Ascending aorta (tissue), 2 donors: ENCODE measurements at regions of chr9 and their contacts with region 1.

Region 1: DNA sequence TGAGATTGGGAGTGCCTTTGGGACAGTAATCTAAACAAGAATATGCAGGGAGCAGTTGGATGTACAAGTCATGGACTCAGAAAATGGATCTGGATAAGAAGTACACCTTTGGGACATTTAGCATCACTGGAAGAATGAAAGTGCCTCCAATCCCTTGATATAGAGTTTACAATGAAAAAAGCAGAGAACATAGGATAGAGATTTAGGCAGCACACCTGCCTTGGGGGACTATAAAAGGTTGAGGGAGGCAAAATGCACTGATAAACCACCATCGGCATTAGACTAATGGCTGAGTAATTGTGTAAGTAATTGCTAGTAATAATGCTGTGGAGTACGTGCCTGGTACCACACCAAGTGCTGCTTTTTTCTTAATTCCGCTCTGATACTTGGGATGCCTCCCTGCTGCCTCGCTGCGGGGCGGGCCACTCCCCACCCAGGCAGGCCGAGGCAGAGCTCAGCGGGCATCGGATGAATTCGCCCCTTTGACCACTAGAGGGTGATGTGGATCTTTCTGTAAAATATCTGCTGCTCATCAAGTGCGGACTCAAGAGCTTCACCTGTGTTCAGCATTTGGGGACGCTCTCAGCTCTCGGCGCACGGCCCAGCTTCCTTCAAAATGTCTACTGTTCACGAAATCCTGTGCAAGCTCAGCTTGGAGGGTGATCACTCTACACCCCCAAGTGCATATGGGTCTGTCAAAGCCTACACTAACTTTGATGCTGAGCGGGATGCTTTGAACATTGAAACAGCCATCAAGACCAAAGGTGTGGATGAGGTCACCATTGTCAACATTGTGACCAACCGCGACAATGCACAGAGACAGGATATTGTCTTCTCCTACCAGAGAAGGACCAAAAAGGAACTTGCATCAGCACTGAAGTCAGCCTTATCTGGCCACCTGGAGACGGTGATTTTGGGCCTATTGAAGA is 99.9 kb downstream of the ANKRD18B start:
- DNase-seq: peak in 1 of 2 donors; percentile 77
- H3K4me3 ChIP-seq: no peak overlapping the region
- H3K27ac ChIP-seq: no peak overlapping the region
- H3K4me1 ChIP-seq: no peaks in the 10 kb centered on the region
- H3K27me3 ChIP-seq: no peaks in the 10 kb centered on the region
- CTCF ChIP-seq: peak; percentile 74 to 89 (median 76)

Region 2: DNA sequence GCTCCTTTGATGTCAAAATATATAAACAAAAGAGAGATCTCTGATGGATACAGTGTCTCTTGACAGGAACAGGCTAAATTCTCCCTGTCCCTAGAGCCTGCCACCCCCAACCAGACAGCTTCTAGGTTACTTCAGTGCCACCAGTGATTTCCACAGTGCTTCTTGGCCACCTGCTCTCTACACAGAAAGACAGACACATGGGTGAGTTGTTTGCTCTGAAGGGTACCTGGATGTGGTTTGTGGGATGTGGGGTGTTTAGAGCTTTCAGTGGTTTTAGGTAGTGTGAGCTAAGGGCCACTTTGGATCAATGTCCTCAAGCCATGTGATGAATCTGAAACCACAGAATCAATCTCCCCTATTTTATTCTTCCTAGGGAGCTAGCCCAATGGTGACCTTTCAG is 25.5 kb after region 1 on chr9:
- intact Hi-C with region 1: no loop called
- DNase-seq: no peak
- H3K4me3 ChIP-seq: no peak overlapping the region
- H3K27ac ChIP-seq: no peak overlapping the region
- H3K4me1 ChIP-seq: no peaks in the 10 kb centered on the region
- H3K27me3 ChIP-seq: no peaks in the 10 kb centered on the region
- CTCF ChIP-seq: no peak

Region 3: GRCh38 chr9:33852216-33852826 is 228.4 kb after region 1 on chr9:
- intact Hi-C with region 1: loop called (anchors 10 kb)
- DNase-seq: peak; percentile 17 to 89
- H3K4me3 ChIP-seq: no peak overlapping the region
- H3K27ac ChIP-seq: peak overlapping the region in 1 of 2 donors; percentile 27
- H3K4me1 ChIP-seq: peaks cover 5 to 17% of the 10 kb centered on the region in 2 donors
- H3K27me3 ChIP-seq: no peaks in the 10 kb centered on the region
- CTCF ChIP-seq: peak; percentile 54 to 81 (median 57)